ENCODE measurements at regions of chr2 and their contacts with region 1.

Region 1: GRCh38 chr2:215619022-215619958 is 183.4 kb upstream of the FN1 start:
- DNase-seq: no peak
- ATAC-seq: peak; percentile 88
- H3K4me3 ChIP-seq: no peak overlapping the region
- H3K27ac ChIP-seq: no peak overlapping the region
- H3K4me1 ChIP-seq: no peaks in the 10 kb centered on the region
- H3K27me3 ChIP-seq: no peaks in the 10 kb centered on the region
- CTCF ChIP-seq: no peak
- EP300 ChIP-seq: no peak
- POLR2A ChIP-seq: no peak
- RAD21 ChIP-seq: no peak

Region 2: GRCh38 chr2:215601990-215602721 is 17.1 kb before region 1 on chr2:
- CTCF ChIA-PET with region 1: interaction called, 3 read pairs
- POLR2A ChIA-PET with region 1: interaction called, 4 read pairs
- RAD21 ChIA-PET with region 1: interaction called, 3 read pairs
- SMC1A ChIA-PET with region 1: interaction called, 23 read pairs
- in situ Hi-C with region 1: no loop called
- intact Hi-C with region 1: no loop called
- DNase-seq: no peak
- ATAC-seq: no peak
- H3K4me3 ChIP-seq: no peak overlapping the region
- H3K27ac ChIP-seq: no peak overlapping the region
- H3K4me1 ChIP-seq: no peaks in the 10 kb centered on the region
- H3K27me3 ChIP-seq: no peaks in the 10 kb centered on the region
- CTCF ChIP-seq: no peak
- EP300 ChIP-seq: no peak
- POLR2A ChIP-seq: no peak
- RAD21 ChIP-seq: no peak

Region 3: DNA sequence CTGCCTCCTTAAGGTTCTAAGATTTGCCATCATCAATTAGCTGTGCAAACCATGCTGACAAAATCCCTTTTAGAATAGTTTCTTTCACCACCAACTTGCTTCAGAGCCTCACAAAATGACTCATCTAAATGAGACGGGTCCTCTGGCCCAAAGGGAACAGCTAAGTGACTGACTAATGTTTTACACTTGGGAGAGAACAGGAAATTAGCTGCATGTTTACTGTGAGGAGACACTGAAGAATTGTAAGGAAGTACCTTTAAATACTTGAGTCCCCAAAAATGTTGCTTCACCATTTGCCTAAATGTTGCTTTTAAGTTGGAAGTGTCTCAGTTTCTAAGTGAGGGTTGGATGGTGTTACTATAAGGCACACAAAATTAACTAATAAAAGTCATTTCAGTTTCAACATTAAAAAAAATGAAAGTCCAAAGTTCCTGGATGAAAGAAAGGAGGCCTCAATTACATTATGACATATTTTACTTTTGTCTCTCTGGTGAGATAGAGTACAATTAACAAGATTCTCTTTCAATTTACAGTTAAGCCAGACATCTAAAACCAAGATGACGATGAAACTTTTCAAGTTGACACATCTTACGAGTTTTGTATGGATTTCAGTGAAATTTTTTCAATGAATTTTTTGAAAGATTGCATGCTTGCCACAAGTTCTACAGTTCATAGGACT is 45.7 kb after region 1 on chr2:
- CTCF ChIA-PET with region 1: no interaction called
- POLR2A ChIA-PET with region 1: no interaction called
- RAD21 ChIA-PET with region 1: interaction called, 3 read pairs
- SMC1A ChIA-PET with region 1: interaction called, 11 read pairs
- in situ Hi-C with region 1: no loop called
- intact Hi-C with region 1: no loop called
- DNase-seq: peak; percentile 63
- ATAC-seq: peak; percentile 93
- H3K4me3 ChIP-seq: no peak overlapping the region
- H3K27ac ChIP-seq: no peak overlapping the region
- H3K4me1 ChIP-seq: no peaks in the 10 kb centered on the region
- H3K27me3 ChIP-seq: no peaks in the 10 kb centered on the region; a peak in 1 of 4 replicates
- CTCF ChIP-seq: no peak
- EP300 ChIP-seq: peak in 1 of 2 experiments; percentile 62; a peak in 1 of 4 replicates
- POLR2A ChIP-seq: no peak
- RAD21 ChIP-seq: no peak

Measured in GM12878 (cell line).